B cell (primary cell): ENCODE measurements at regions of chr12 and their contacts with region 1.

Region 1: GRCh38 chr12:112900299-112901145 is 6.2 kb upstream of the OAS1 start:
- DNase-seq: peak; percentile 70
- ATAC-seq: no peak
- H3K4me3 ChIP-seq: no peak overlapping the region
- H3K4me3 Mint-ChIP-seq: no peak overlapping the region
- H3K27ac ChIP-seq: no peak overlapping the region
- H3K27ac Mint-ChIP-seq: peak overlapping the region; percentile 56
- H3K4me1 ChIP-seq: peaks cover 8 to 31% of the 10 kb centered on the region in 2 donors
- H3K4me1 Mint-ChIP-seq: peaks cover 38% of the 10 kb centered on the region
- H3K27me3 ChIP-seq: peaks cover 0 to 3% (median 0%) of the 10 kb centered on the region in 4 experiments
- H3K27me3 Mint-ChIP-seq: peaks cover 19% of the 10 kb centered on the region
- CTCF ChIP-seq: peak; percentile 85

Region 2: GRCh38 chr12:112937741-112938719 is 37.5 kb after region 1 on chr12 and contains the start of gene OAS3:
- CTCF ChIA-PET with region 1: interaction called, 10 read pairs
- POLR2A ChIA-PET with region 1: interaction called, 3 read pairs
- intact Hi-C with region 1: no loop called
- DNase-seq: peak; percentile 81
- ATAC-seq: peak; percentile 70
- H3K4me3 ChIP-seq: peak within 1 kb of the TSS; percentile 63 to 81 (median 76)
- H3K4me3 Mint-ChIP-seq: peak within 1 kb of the TSS; percentile 89
- H3K27ac ChIP-seq: peak within 1 kb of the TSS; percentile 45 to 59
- H3K27ac Mint-ChIP-seq: peak within 1 kb of the TSS; percentile 83
- H3K4me1 ChIP-seq: peaks cover 25 to 26% of the 10 kb centered on the region in 2 donors
- H3K4me1 Mint-ChIP-seq: peaks cover 28% of the 10 kb centered on the region
- H3K27me3 ChIP-seq: no peaks in the 10 kb centered on the region
- H3K27me3 Mint-ChIP-seq: no peaks in the 10 kb centered on the region
- CTCF ChIP-seq: no peak
- total RNA-seq, gene OAS3: 24.9 and 25.5 TPM in 2 replicates

Region 3: GRCh38 chr12:112978163-112979040 is 77.9 kb after region 1 on chr12 and contains the start of gene OAS2:
- CTCF ChIA-PET with region 1: interaction called, 30 read pairs
- POLR2A ChIA-PET with region 1: no interaction called
- intact Hi-C with region 1: loop called (anchors 1 kb)
- DNase-seq: peak; percentile 92
- ATAC-seq: peak; percentile 94
- H3K4me3 ChIP-seq: peak within 1 kb of the TSS; percentile 70 to 94 (median 78)
- H3K4me3 Mint-ChIP-seq: peak within 1 kb of the TSS; percentile 98
- H3K27ac ChIP-seq: peak within 1 kb of the TSS; percentile 90 to 94
- H3K27ac Mint-ChIP-seq: peak within 1 kb of the TSS; percentile 98
- H3K4me1 ChIP-seq: peaks cover 39 to 40% of the 10 kb centered on the region in 2 donors
- H3K4me1 Mint-ChIP-seq: peaks cover 59% of the 10 kb centered on the region
- H3K27me3 ChIP-seq: no peaks in the 10 kb centered on the region
- H3K27me3 Mint-ChIP-seq: no peaks in the 10 kb centered on the region
- CTCF ChIP-seq: no peak
- total RNA-seq, gene OAS2: 57.4 and 59.3 TPM in 2 replicates

Region 4: DNA sequence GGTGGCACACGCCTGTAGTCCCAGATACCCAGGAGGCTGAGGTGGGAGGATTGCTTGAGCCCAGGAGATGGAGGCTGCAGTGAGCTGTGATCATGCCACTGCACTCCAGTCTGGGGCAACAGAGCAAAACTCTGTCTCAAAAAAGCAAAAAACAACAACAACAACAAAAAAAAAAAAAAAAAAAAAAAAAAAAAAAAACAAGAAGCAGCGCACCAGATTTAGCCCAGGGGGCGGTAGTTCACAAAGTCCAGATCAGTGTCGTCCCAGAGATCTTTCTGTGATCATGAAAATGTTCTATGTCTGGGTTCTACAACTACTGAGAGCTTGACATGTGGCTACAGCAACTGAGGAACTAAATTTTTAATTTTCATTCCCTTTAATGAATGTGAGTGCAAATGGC is 105.2 kb after region 1 on chr12:
- CTCF ChIA-PET with region 1: interaction called, 12 read pairs
- POLR2A ChIA-PET with region 1: interaction called, 4 read pairs
- intact Hi-C with region 1: no loop called
- DNase-seq: no peak
- ATAC-seq: no peak
- H3K4me3 ChIP-seq: no peak overlapping the region
- H3K4me3 Mint-ChIP-seq: no peak overlapping the region
- H3K27ac ChIP-seq: no peak overlapping the region
- H3K27ac Mint-ChIP-seq: no peak overlapping the region
- H3K4me1 ChIP-seq: no peaks in the 10 kb centered on the region
- H3K4me1 Mint-ChIP-seq: no peaks in the 10 kb centered on the region
- H3K27me3 ChIP-seq: no peaks in the 10 kb centered on the region
- H3K27me3 Mint-ChIP-seq: no peaks in the 10 kb centered on the region
- CTCF ChIP-seq: peak; percentile 26

Region 5: DNA sequence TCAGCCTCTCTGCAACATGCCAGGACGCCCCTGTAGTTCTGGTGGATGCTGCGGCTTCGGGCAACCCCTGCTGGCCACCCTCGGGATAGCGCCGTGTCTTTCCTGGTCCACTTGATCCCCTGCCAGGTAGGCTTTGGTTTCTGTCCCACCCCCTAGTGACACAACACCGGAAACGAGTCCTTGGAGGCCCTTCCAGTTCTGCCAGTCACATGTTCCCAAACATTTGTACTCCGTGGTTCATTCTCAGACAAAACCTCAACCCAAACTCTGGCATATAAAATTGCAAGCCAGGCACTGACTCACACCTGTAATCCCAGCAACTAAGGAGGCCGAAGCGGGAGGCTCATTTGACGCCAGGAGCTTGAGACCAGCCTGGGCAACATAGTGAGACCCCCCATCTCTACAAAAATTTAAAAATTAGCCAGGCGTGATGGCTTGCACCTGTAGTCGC is 197.9 kb after region 1 on chr12:
- CTCF ChIA-PET with region 1: interaction called, 11 read pairs
- POLR2A ChIA-PET with region 1: interaction called, 9 read pairs
- intact Hi-C with region 1: loop called (anchors 5 kb)
- DNase-seq: peak; percentile 82
- ATAC-seq: peak; percentile 87
- H3K4me3 ChIP-seq: no peak overlapping the region
- H3K4me3 Mint-ChIP-seq: no peak overlapping the region
- H3K27ac ChIP-seq: peak overlapping the region in 1 of 2 donors; percentile 15
- H3K27ac Mint-ChIP-seq: peak overlapping the region; percentile 73
- H3K4me1 ChIP-seq: peaks cover 9 to 20% of the 10 kb centered on the region in 2 donors
- H3K4me1 Mint-ChIP-seq: peaks cover 18% of the 10 kb centered on the region
- H3K27me3 ChIP-seq: peaks cover 0 to under 1% (median 0%) of the 10 kb centered on the region in 4 experiments
- H3K27me3 Mint-ChIP-seq: no peaks in the 10 kb centered on the region
- CTCF ChIP-seq: peak; percentile 95